Activated T-helper 2 cell treated with anti-CD3 and anti-CD28 coated beads, Interferon-gamma antibody, Interleukin-2, Interleukin-4, amounts not matched to agents 10 μg/mL and 5 μg/mL and 100 μg/mL, durations not matched to agents 14 hours and 24 hours and 36 hours (primary cell): ENCODE measurements at regions of chr18 and their contacts with region 1.

Region 1: DNA sequence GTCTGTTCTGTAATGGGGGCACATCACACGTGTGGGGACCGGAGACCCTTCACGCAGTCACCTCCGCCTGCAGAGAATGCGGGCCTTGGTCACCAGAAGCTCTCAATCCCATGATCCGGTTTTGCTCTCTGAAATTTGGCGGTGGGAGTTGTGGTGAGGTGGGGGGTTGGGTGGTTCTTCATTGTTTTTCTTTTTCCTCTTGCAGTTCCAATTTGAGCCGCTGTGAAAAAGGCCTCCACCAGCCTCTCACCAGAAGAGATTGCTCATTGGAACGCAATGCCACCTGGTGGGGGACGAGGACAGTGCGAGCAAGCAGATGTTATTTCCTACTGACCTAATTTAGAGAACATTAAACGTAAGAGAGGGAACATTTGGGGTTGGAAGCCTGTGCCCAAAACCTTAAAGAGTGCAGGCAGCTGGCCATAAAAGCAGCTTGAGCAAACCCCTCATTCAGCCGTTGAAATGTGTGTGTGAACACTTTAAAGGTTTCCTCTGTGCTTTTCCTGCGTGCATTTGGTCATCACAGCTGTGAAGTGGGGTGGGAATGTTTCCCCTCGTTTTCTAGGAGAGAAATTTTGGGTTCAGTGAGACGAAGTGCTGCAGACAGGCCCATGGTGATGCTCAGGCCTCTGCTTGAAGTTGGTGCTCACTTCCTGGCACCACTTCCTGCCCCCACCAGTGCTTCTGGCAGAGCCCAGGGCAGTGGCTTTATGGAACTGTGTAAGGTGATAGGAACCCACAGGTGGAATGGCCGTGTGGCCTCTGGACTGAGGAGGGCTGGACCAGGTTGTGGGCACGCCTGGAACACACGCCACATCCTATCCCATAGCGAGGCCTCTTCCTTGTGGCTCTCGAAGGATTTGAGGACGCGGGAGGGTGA is 61.7 kb downstream of the ZCCHC2 start:
- DNase-seq: peak; percentile 77
- H3K4me3 Mint-ChIP-seq: peak overlapping the region; percentile 28
- H3K27ac Mint-ChIP-seq: peak overlapping the region; percentile 46
- H3K4me1 Mint-ChIP-seq: peaks cover 35% of the 10 kb centered on the region
- H3K27me3 Mint-ChIP-seq: no peaks in the 10 kb centered on the region

Region 2: DNA sequence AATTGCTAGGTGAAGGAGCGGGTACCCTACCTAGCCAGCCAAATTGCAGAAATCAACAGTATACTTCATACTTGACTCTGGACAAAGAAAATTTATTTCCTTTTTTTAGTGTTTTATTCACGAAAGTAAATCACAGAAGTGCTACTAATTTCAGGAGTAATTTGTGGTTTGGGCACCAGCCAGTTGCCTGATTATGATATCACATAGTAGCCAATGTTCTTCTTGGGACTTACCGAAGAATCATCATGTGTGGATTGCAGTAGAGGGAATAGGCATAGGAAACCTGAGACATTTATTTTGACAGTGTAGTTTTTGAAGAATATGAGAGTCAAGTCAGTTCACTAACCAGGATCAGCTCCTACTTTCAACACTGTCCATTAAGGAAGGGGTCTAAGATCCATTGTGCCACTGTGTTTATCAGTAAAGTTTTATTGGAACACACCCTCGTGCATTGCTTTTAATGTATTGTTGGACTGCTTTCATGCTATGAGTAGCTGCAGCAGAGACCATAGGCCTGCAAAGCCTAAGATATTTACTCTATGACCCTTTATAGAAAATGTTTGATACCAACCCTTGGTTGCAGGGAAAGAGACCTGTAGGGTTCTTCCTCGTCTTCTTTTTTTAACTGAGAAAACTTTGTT is 227.3 kb before region 1 on chr18:
- intact Hi-C with region 1: no loop called
- DNase-seq: no peak
- H3K4me3 Mint-ChIP-seq: no peak overlapping the region
- H3K27ac Mint-ChIP-seq: no peak overlapping the region
- H3K4me1 Mint-ChIP-seq: peaks cover 12% of the 10 kb centered on the region
- H3K27me3 Mint-ChIP-seq: no peaks in the 10 kb centered on the region

Region 3: DNA sequence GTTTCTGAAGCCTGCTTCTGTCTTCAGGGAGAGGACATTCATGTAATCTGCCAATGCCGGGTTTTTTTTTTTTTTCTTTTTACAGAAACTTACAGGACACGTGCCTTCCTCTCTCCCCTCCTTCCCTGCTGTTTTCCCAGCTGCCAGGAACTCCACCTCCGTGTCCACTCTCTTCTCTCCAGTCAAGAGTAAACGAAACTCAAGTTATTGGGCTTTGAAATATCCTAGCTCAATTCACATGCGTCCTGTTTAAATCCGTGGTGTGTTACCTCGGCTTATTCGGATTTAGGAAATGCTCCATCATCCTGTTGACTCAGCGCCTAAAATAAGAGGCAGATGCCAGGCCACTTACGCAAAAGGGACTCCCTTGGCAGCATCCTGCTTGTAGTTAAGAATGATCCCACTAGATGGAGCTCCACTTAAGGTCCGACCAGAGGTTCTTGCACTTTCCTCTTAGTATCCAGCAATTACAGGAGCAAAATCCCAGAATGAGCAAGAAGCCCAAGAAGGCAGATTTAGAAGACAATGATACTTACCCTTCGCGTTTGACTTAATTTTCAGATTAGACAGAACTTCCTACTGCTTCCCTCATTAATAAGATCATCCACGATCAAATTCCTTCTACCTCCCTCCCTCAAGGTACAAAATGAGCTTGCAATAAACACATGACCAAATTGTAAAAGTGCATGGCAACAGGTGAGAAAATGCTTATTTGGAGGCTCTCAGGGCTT is 158.9 kb before region 1 on chr18:
- intact Hi-C with region 1: loop called (anchors 1 kb)
- DNase-seq: peak; percentile 55
- H3K4me3 Mint-ChIP-seq: peak overlapping the region; percentile 44
- H3K27ac Mint-ChIP-seq: peak overlapping the region; percentile 72
- H3K4me1 Mint-ChIP-seq: peaks cover 40% of the 10 kb centered on the region
- H3K27me3 Mint-ChIP-seq: no peaks in the 10 kb centered on the region

Region 4: GRCh38 chr18:62522504-62523254 is 61.8 kb before region 1 on chr18 and contains the start of gene ZCCHC2:
- intact Hi-C with region 1: loop called (anchors 1 kb)
- DNase-seq: peak; percentile 99
- H3K4me3 Mint-ChIP-seq: peak within 1 kb of the TSS; percentile 95
- H3K27ac Mint-ChIP-seq: peak within 1 kb of the TSS; percentile 88
- H3K4me1 Mint-ChIP-seq: peaks cover 29% of the 10 kb centered on the region
- H3K27me3 Mint-ChIP-seq: no peaks in the 10 kb centered on the region
- total RNA-seq, gene ZCCHC2: 43.8 and 48.6 TPM in 2 replicates

Region 5: GRCh38 chr18:62957885-62958472 is 373.5 kb after region 1 on chr18:
- intact Hi-C with region 1: loop called (anchors 10 kb)
- DNase-seq: peak; percentile 53
- H3K4me3 Mint-ChIP-seq: no peak overlapping the region
- H3K27ac Mint-ChIP-seq: no peak overlapping the region
- H3K4me1 Mint-ChIP-seq: peaks cover 21% of the 10 kb centered on the region
- H3K27me3 Mint-ChIP-seq: no peaks in the 10 kb centered on the region

Region 6: GRCh38 chr18:63422087-63422809 is 837.8 kb after region 1 on chr18 and contains the start of gene VPS4B:
- intact Hi-C with region 1: loop called (anchors 10 kb)
- DNase-seq: peak; percentile 100
- H3K4me3 Mint-ChIP-seq: peak within 1 kb of the TSS; percentile 89
- H3K27ac Mint-ChIP-seq: peak within 1 kb of the TSS; percentile 92
- H3K4me1 Mint-ChIP-seq: peaks cover 26% of the 10 kb centered on the region
- H3K27me3 Mint-ChIP-seq: peaks cover 2% of the 10 kb centered on the region
- total RNA-seq, gene VPS4B: 53.8 and 56.1 TPM in 2 replicates